Sigmoid colon (tissue), 7 donors: ENCODE measurements at regions of chr5 and their contacts with region 1.

Region 1: DNA sequence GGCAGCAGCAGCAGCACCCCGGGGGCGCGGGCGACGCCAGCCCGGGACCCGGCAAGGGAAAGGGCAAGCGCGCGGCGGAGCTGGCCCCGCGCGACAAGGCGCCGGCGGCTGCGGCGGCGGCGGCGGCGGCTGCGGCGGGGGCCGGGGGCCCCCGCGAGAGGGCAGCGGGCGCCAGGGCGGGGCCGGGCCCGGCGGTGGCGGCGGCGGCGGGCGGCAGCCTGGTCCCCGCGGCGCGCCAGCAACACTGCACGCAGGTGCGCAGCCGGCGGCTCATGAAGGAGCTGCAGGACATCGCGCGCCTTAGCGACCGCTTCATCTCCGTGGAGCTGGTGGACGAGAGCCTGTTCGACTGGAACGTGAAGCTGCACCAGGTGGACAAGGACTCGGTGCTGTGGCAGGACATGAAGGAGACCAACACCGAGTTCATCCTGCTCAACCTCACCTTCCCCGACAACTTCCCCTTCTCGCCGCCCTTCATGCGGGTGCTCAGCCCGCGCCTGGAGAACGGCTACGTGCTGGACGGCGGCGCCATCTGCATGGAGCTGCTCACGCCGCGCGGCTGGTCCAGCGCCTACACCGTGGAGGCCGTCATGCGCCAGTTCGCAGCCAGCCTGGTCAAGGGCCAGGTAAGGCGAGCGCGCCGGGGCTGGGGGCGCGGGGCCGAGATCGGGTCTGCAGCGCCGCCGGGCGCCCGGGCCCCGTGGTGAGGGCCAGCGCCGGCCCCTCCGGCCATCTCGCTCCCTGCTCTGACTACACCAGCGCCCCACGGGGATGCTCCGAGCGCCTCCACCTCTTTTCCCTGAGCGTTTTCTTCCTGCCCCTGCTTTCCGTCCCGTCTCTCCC is at the start of gene UBE2QL1:
- DNase-seq: no peak
- H3K4me3 ChIP-seq: peak within 1 kb of the TSS; percentile 33 to 68 (median 57)
- H3K27ac ChIP-seq: peak within 1 kb of the TSS in 3 of 4 donors; percentile 60 to 76 (median 74)
- H3K4me1 ChIP-seq: peaks cover 0 to 39% (median 27%) of the 10 kb centered on the region in 4 donors
- H3K27me3 ChIP-seq: peaks cover 0 to under 1% (median 0%) of the 10 kb centered on the region in 3 donors
- CTCF ChIP-seq: no peak
- EP300 ChIP-seq: no peak
- POLR2A ChIP-seq: no peak
- total RNA-seq, gene UBE2QL1: 3.6 to 5.5 (median 5.0) TPM

Region 2: GRCh38 chr5:6510132-6510531 is 61.3 kb after region 1 on chr5:
- intact Hi-C with region 1: loop called (anchors 10 kb)
- DNase-seq: no peak
- H3K4me3 ChIP-seq: no peak overlapping the region
- H3K27ac ChIP-seq: no peak overlapping the region
- H3K4me1 ChIP-seq: no peaks in the 10 kb centered on the region
- H3K27me3 ChIP-seq: no peaks in the 10 kb centered on the region
- CTCF ChIP-seq: no peak
- EP300 ChIP-seq: no peak
- POLR2A ChIP-seq: no peak

Region 3: GRCh38 chr5:6545770-6546690 is 97.2 kb after region 1 on chr5:
- intact Hi-C with region 1: loop called (anchors 2 kb)
- DNase-seq: peak; percentile 88
- H3K4me3 ChIP-seq: peak overlapping the region in 2 of 4 donors; percentile 17 to 27
- H3K27ac ChIP-seq: peak overlapping the region in 3 of 4 donors; percentile 85 to 95 (median 86)
- H3K4me1 ChIP-seq: peaks cover 0 to 77% (median 66%) of the 10 kb centered on the region in 4 donors
- H3K27me3 ChIP-seq: no peaks in the 10 kb centered on the region
- CTCF ChIP-seq: no peak
- EP300 ChIP-seq: peak; percentile 74 to 96 (median 88)
- POLR2A ChIP-seq: no peak

Region 4: DNA sequence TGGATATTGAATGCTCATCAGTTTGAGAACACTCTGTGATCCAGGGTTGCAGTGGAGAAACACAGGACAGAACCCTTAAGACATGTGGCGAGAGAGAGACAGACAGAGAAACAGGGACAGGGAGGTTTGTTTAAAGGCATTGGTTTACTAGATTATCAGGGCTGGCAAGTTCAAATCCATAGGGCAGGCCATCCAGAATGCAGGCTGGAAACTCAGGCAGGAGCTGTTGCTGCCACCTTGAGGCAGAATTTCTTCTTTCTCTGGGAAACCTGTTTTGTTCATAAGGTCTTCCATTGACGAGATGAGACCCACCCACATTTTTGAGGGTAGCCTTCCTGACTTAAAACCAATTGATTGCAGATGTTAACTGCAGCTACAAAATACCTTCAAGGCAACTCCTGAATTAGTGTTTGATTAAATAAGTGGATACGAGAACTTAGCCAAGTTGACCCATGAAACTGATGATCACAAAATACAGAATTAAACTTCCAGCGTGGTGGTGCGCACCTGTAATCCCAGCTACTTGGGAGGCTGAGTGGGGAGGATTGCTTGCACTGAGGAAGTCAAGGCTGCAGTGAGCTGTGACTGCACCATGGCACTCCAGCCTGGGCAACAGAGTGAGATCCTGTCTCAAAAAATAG is 128.1 kb after region 1 on chr5:
- intact Hi-C with region 1: loop called (anchors 5 kb)
- DNase-seq: no peak
- H3K4me3 ChIP-seq: no peak overlapping the region
- H3K27ac ChIP-seq: no peak overlapping the region
- H3K4me1 ChIP-seq: no peaks in the 10 kb centered on the region
- H3K27me3 ChIP-seq: no peaks in the 10 kb centered on the region
- CTCF ChIP-seq: peak; percentile 9 to 60 (median 39)
- EP300 ChIP-seq: no peak
- POLR2A ChIP-seq: no peak

Region 5: GRCh38 chr5:6712577-6713275 is 263.9 kb after region 1 on chr5:
- intact Hi-C with region 1: loop called (anchors 10 kb)
- DNase-seq: peak; percentile 98
- H3K4me3 ChIP-seq: peak overlapping the region; percentile 69 to 78 (median 74)
- H3K27ac ChIP-seq: peak overlapping the region; percentile 92 to 98 (median 97)
- H3K4me1 ChIP-seq: peaks cover 0 to 44% (median 36%) of the 10 kb centered on the region in 4 donors
- H3K27me3 ChIP-seq: no peaks in the 10 kb centered on the region
- CTCF ChIP-seq: no peak
- EP300 ChIP-seq: no peak
- POLR2A ChIP-seq: no peak

Region 6: GRCh38 chr5:7105358-7105757 is 656.5 kb after region 1 on chr5:
- intact Hi-C with region 1: no loop called
- DNase-seq: no peak
- H3K4me3 ChIP-seq: no peak overlapping the region
- H3K27ac ChIP-seq: no peak overlapping the region
- H3K4me1 ChIP-seq: no peaks in the 10 kb centered on the region
- H3K27me3 ChIP-seq: no peaks in the 10 kb centered on the region
- CTCF ChIP-seq: no peak
- EP300 ChIP-seq: no peak
- POLR2A ChIP-seq: no peak